GM10248 (cell line): ENCODE measurements at regions of chr6 and their contacts with region 1.

Region 1: GRCh38 chr6:811831-812230 is 118.9 kb upstream of the EXOC2 start:
- DNase-seq: no peak
- CTCF ChIP-seq: no peak

Region 2: DNA sequence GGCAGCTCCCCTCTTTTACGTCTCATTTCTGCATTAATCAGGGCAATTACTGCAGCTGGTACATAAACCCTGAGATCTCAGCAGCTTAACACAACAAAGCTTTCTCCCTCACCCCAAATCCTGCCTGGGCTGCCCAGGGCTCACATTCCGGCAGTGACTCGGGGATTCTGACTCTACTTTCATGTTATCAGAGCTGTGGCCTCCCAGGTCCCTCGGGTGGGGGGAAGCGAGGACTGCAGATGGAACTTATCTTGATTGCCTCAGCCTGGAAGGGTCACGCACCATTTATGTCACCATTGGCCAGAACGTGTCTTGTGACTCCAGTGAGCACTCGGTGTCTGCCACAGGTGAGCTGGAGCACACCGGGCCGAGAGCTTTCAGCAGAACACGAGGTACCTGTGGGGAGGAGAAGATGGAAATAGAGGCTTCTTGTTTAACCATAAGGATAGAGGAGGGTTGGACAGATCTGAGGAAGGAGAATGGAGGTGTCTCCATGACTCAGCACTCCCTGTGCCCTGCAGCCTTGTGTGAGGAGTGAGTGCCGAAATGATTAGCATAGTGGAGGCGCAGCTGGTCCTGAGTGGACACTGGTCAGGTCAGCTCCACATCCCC is 30.4 kb before region 1 on chr6:
- CTCF ChIA-PET with region 1: no interaction called
- POLR2A ChIA-PET with region 1: no interaction called
- DNase-seq: no peak
- CTCF ChIP-seq: no peak

Region 3: DNA sequence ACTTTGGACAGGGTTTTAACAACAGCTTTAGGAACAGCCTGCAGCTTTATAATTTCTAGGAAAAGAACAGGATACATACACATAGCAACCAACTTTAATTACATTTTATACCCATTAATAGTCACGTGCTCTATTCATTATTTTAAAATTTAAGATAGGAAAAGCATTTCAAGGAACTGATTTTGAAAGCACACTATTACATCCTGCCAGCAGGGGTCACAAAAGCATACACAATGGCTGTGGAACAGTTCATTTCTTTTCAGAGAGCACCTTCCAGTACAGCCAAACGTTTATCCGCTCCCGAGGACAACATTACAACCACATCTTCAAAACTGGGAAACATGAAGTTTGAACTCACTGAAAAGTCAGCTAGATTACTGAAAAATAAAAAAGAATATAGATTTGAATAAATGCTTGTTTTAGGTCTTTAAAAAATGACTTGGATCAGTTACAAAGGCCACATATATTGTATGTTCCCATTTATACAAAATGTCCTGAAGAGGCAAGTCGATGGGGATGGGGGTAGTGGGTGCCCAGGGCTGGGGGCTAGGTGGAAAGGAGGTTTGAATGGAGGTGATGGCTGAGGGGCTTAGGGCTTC is 14.3 kb before region 1 on chr6:
- CTCF ChIA-PET with region 1: interaction called, 11 read pairs
- POLR2A ChIA-PET with region 1: no interaction called
- DNase-seq: peak; percentile 39
- CTCF ChIP-seq: peak; percentile 57